Calu3 (cell line): ENCODE measurements at regions of chr9 and their contacts with region 1.

Region 1: DNA sequence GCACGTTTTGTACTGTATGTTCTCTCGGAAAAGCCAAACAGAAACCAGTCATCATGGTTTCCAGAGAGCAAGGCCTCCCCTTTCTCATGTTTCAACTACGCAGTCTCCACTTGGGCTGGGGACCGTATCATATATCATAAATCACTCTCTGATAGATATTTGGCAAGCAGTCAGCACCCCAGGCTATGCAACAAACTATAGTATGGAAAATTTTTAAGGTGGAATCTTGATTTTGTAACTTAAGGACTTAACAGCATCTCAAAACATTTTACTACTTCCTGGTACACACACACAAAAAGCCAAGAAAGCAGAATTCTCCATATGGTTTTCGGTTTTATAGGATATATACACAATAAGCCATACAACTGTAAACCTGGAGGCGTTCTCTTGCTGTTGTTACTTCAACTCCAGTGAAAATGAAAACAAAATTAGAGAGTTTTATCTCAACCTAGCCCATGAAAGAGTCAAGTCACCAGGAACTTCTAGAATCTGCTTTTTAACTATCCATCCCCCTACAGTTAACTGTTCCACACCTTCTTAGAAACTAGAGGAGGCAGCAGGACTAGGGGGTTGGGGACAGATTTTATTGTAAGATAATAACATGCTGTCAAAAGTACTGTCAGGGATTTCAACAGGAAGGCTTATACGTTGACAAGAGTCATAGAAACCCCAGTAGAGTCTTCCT is 283.4 kb downstream of the NFIB start:
- DNase-seq: peak; percentile 42
- H3K4me3 Mint-ChIP-seq: peak overlapping the region; percentile 17
- H3K27ac Mint-ChIP-seq: no peak overlapping the region
- H3K4me1 Mint-ChIP-seq: peaks cover 12% of the 10 kb centered on the region
- H3K27me3 Mint-ChIP-seq: no peaks in the 10 kb centered on the region
- CTCF ChIP-seq: no peak

Region 2: GRCh38 chr9:12759761-12760160 is 1270.8 kb before region 1 on chr9:
- CTCF ChIA-PET with region 1: no interaction called
- intact Hi-C with region 1: loop called (anchors 10 kb)
- DNase-seq: no peak
- H3K4me3 Mint-ChIP-seq: no peak overlapping the region
- H3K27ac Mint-ChIP-seq: no peak overlapping the region
- H3K4me1 Mint-ChIP-seq: peaks cover 39% of the 10 kb centered on the region
- H3K27me3 Mint-ChIP-seq: no peaks in the 10 kb centered on the region
- CTCF ChIP-seq: no peak

Region 3: GRCh38 chr9:13431222-13431536 is 599.3 kb before region 1 on chr9:
- CTCF ChIA-PET with region 1: no interaction called
- intact Hi-C with region 1: no loop called
- DNase-seq: no peak
- H3K4me3 Mint-ChIP-seq: no peak overlapping the region
- H3K27ac Mint-ChIP-seq: no peak overlapping the region
- H3K4me1 Mint-ChIP-seq: no peaks in the 10 kb centered on the region
- H3K27me3 Mint-ChIP-seq: no peaks in the 10 kb centered on the region
- CTCF ChIP-seq: no peak

Region 4: DNA sequence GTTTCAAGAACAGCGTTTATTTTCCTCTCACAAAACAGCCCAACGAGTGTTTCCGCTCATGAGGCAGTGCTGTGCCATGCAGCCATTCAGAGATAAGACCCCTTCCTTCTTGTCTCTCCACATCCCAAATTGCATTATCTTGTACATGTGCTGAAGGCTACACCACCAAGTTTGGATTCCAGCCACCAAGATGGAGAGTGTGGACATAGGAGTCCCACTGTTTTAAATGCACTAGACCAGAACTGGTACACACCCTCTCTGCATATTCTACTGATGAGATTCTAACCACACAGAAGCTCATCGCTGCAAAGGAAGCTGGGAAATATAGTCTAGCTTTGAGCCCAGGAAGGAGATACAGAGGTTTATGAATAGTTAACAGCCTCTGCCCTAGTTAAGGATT is 226.0 kb before region 1 on chr9:
- CTCF ChIA-PET with region 1: no interaction called
- intact Hi-C with region 1: no loop called
- DNase-seq: no peak
- H3K4me3 Mint-ChIP-seq: no peak overlapping the region
- H3K27ac Mint-ChIP-seq: no peak overlapping the region
- H3K4me1 Mint-ChIP-seq: no peaks in the 10 kb centered on the region
- H3K27me3 Mint-ChIP-seq: peaks cover 13% of the 10 kb centered on the region
- CTCF ChIP-seq: no peak

Region 5: DNA sequence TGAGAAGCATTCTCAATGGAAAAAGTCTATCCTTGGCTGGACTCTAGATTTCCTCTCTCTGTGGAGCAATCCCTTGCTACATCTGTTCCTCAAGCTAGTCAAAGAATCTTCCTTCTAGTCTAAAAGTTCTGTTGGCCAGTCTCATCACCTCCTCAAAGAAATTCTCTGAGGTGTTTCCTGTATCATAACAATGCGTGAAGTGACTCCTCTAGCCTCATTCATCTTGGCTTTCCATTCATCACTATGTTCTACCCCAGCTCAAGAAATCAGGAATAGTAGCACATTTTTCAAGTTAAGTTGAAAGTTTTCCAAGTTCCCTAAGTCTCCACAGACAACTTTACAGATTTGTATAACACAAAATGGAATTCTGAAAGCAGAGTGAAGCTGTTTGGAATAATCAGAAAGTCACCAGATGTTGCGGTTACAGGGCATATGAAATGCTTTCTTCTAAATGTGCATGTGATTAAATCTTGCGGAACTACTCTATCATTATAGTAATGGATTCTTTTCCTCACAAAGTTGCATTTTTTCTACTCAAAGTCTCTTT is 1056.3 kb after region 1 on chr9:
- CTCF ChIA-PET with region 1: no interaction called
- intact Hi-C with region 1: no loop called
- DNase-seq: no peak
- H3K4me3 Mint-ChIP-seq: no peak overlapping the region
- H3K27ac Mint-ChIP-seq: no peak overlapping the region
- H3K4me1 Mint-ChIP-seq: no peaks in the 10 kb centered on the region
- H3K27me3 Mint-ChIP-seq: no peaks in the 10 kb centered on the region
- CTCF ChIP-seq: no peak